HepG2 (cell line): ENCODE measurements at regions of chr3 and their contacts with region 1.

Region 1: GRCh38 chr3:9396700-9397521 is 504 bp upstream of the SETD5 start:
- DNase-seq: peak; percentile 98
- ATAC-seq: peak; percentile 88
- H3K4me3 ChIP-seq: peak overlapping the region; percentile 91 to 95 (median 92); a peak in 5 of 6 replicates
- H3K27ac ChIP-seq: peak overlapping the region; percentile 93
- H3K4me1 ChIP-seq: peaks cover 60% of the 10 kb centered on the region
- H3K27me3 ChIP-seq: no peaks in the 10 kb centered on the region; a peak in 1 of 5 replicates
- CTCF ChIP-seq: 0 out of 2 replicates have a peak, but pooled peaks have one; percentile 4
- EP300 ChIP-seq: no peak
- POLR2A ChIP-seq: peak; percentile 85 to 97
- RAD21 ChIP-seq: no peak; the same call in 1 of the 2 replicates

Region 2: GRCh38 chr3:9352917-9353752 is 43.8 kb before region 1 on chr3:
- CTCF ChIA-PET with region 1: no interaction called
- POLR2A ChIA-PET with region 1: interaction called, 10 read pairs
- in situ Hi-C with region 1: no loop called
- intact Hi-C with region 1: no loop called
- DNase-seq: peak; percentile 88
- ATAC-seq: peak; percentile 96
- H3K4me3 ChIP-seq: peak overlapping the region; percentile 0 to 59 (median 56)
- H3K27ac ChIP-seq: peak overlapping the region; percentile 84
- H3K4me1 ChIP-seq: peaks cover 40% of the 10 kb centered on the region
- H3K27me3 ChIP-seq: no peaks in the 10 kb centered on the region
- CTCF ChIP-seq: peak; percentile 91
- EP300 ChIP-seq: peak in 1 of 2 experiments; percentile 69; a peak in 2 of 4 replicates
- POLR2A ChIP-seq: no peak
- RAD21 ChIP-seq: peak; percentile 73

Region 3: GRCh38 chr3:9384141-9384853 is 12.6 kb before region 1 on chr3:
- CTCF ChIA-PET with region 1: no interaction called
- POLR2A ChIA-PET with region 1: interaction called, 10 read pairs
- in situ Hi-C with region 1: no loop called
- intact Hi-C with region 1: no loop called
- DNase-seq: no peak
- ATAC-seq: peak; percentile 19
- H3K4me3 ChIP-seq: no peak overlapping the region
- H3K27ac ChIP-seq: no peak overlapping the region
- H3K4me1 ChIP-seq: peaks cover 22% of the 10 kb centered on the region
- H3K27me3 ChIP-seq: no peaks in the 10 kb centered on the region
- CTCF ChIP-seq: no peak
- EP300 ChIP-seq: no peak
- POLR2A ChIP-seq: no peak; a peak in 2 of 4 replicates
- RAD21 ChIP-seq: no peak

Region 4: DNA sequence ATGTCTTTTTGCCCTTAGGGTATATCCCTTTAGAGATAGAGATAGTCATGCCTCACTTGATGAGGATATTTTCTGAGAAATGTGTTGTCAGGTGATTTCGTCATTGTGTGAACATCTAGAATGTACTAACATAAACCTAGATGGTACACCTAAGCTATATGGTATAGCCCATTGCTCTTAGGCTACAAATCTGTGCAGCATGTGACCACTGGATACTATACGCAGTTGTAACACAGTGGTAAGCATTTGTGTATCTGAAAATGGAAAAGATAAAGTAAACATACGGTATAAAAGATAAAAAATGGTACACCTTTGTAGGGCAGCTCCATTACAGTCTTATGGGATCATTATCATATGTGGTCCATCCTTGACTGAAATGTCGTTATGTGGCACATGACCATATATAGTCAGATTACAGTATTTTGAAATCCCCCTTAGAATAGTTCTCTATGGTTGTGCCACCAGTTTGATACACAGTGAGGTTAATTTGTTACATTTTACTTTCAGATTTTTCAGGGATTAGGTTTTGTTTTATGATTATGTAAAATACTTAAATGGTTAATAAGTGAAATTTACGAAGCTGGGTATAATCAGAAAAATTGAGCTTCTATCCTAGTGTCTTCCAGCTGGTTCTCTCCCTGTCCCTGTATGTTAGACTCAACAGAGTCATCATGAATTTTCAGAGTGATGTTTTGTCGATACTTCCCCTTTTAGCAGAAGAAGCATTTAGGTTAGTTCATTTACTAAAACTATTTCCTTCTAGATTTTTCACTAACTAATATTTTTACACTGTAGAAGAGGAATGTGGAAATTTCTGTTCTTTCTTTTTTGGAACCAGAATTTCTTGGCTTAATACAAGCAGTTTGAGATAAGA is 13.3 kb after region 1 on chr3:
- CTCF ChIA-PET with region 1: no interaction called
- POLR2A ChIA-PET with region 1: interaction called, 25 read pairs
- in situ Hi-C with region 1: no loop called
- intact Hi-C with region 1: no loop called
- DNase-seq: no peak
- ATAC-seq: no peak
- H3K4me3 ChIP-seq: no peak overlapping the region
- H3K27ac ChIP-seq: no peak overlapping the region
- H3K4me1 ChIP-seq: peaks cover 99% of the 10 kb centered on the region
- H3K27me3 ChIP-seq: no peaks in the 10 kb centered on the region
- CTCF ChIP-seq: no peak
- EP300 ChIP-seq: no peak
- POLR2A ChIP-seq: no peak
- RAD21 ChIP-seq: no peak

Region 5: DNA sequence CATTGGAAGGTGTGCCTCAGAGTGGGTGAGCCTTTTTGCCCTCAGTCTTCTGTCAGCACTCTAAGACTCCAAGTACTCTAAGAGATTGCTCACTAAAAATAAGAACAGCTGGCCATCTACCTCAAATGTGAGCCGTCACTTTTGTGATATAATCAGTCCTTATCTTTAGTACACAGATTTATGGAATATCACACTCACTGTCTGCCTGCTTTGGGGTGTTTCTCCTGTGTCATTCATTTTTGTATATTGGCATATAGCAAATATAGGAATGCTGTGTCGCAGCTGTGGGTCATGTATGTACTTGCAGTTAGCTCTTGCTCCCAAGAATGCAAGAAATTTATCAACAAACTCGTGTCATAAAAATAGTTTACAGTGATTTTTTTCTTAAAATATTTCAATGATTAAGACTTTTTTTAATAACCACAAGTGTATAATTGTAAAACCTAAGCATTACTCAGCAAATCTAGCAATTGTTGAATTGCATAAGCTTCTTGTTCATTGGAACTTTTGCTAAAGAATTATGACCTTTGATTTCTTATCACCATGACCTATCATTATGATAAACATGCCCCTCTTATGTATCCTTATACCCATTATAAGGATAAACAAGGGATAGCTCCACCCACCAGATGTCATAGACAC is 19.3 kb after region 1 on chr3:
- CTCF ChIA-PET with region 1: no interaction called
- POLR2A ChIA-PET with region 1: interaction called, 81 read pairs
- in situ Hi-C with region 1: no loop called
- intact Hi-C with region 1: no loop called
- DNase-seq: no peak
- ATAC-seq: no peak
- H3K4me3 ChIP-seq: no peak overlapping the region
- H3K27ac ChIP-seq: peak overlapping the region; percentile 39
- H3K4me1 ChIP-seq: peaks cover 86% of the 10 kb centered on the region
- H3K27me3 ChIP-seq: no peaks in the 10 kb centered on the region
- CTCF ChIP-seq: no peak
- EP300 ChIP-seq: no peak
- POLR2A ChIP-seq: no peak
- RAD21 ChIP-seq: no peak

Region 6: DNA sequence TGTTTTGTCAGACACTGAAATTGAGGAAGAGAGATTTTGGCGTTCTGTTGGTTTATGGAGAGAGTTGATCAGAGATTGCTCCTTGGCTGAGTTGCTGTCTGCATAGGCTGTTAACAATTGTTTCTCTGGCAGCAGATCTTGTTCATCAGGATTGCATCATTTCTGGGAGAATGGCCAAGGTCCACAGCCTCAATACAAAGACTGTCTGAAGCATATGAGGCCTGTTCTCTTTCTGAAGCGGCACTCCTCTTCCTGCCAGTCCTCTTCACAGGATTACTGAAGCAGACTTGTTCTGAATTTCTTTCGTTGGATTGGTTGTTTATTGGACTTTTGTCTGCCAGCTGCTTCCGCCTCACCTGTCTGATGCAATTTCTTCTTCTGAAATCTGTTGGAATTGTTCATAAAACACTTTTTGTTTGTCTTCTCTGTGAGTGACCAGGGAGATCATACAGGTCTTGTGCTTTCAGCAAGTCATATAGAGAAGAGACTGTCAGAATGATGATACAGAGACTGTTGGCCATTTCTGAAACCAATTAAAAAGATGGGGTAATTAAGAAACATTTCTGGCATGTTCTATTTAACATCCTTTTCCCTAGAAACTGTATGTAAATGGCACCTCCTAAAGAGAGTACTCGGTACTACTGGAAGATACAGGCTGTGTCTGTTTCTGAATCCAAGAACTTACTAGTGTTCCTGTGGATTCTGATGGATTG is 26.0 kb after region 1 on chr3:
- CTCF ChIA-PET with region 1: no interaction called
- POLR2A ChIA-PET with region 1: interaction called, 81 read pairs
- in situ Hi-C with region 1: no loop called
- intact Hi-C with region 1: loop called (anchors 1 kb)
- DNase-seq: peak; percentile 98
- ATAC-seq: peak; percentile 99
- H3K4me3 ChIP-seq: peak overlapping the region in 2 of 3 experiments; percentile 15 to 35; a peak in 3 of 6 replicates
- H3K27ac ChIP-seq: peak overlapping the region; percentile 60
- H3K4me1 ChIP-seq: peaks cover 89% of the 10 kb centered on the region
- H3K27me3 ChIP-seq: no peaks in the 10 kb centered on the region
- CTCF ChIP-seq: peak; percentile 40
- EP300 ChIP-seq: peak in 1 of 2 experiments; percentile 32; a peak in 2 of 4 replicates
- POLR2A ChIP-seq: peak; percentile 24 to 67; a peak in 2 of 4 replicates
- RAD21 ChIP-seq: peak; percentile 58

Region 7: DNA sequence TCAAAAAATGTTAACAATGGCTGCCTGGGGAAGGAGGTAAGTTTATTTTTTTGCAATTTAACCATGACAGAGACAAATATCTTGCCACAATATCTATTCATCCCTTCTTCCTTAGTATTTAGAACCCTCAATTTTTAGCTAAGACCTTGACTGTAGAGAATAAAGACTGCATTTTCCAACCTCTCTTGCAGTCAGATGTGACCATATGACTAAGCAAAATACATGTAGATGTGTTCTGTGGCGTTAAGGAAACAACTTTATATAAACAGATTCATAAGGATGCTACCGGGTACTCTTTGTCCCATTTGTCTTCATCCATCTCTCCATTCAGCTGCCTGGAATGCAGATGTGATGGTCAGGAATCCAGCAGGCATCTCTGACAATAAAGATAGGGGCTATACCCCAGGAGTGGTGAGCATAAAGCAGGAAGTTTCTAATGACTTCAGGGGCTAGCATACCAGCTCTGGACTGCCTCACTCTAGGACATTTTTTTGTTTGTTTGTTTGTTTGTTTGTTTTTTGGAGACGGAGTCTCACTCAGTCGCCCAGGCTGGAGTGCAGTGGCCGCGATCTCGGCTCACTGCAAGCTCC is 115.6 kb after region 1 on chr3:
- CTCF ChIA-PET with region 1: no interaction called
- POLR2A ChIA-PET with region 1: no interaction called
- in situ Hi-C with region 1: no loop called
- intact Hi-C with region 1: no loop called
- DNase-seq: no peak
- ATAC-seq: no peak
- H3K4me3 ChIP-seq: no peak overlapping the region
- H3K27ac ChIP-seq: no peak overlapping the region
- H3K4me1 ChIP-seq: no peaks in the 10 kb centered on the region
- H3K27me3 ChIP-seq: peaks cover 0 to 20% of the 10 kb centered on the region in 2 experiments; a peak in 3 of 5 replicates
- CTCF ChIP-seq: no peak
- EP300 ChIP-seq: no peak
- POLR2A ChIP-seq: no peak
- RAD21 ChIP-seq: no peak